ENCODE measurements at regions of chr1 and their contacts with region 1.

Region 1: GRCh38 chr1:81549604-81550127 is 251.1 kb upstream of the ADGRL2 start:
- DNase-seq: peak; percentile 35
- ATAC-seq: peak; percentile 78
- H3K4me3 ChIP-seq: no peak overlapping the region
- H3K27ac ChIP-seq: peak overlapping the region; percentile 14
- H3K4me1 ChIP-seq: peaks cover 32% of the 10 kb centered on the region
- H3K27me3 ChIP-seq: no peaks in the 10 kb centered on the region
- CTCF ChIP-seq: peak; percentile 58 to 67 (median 63)
- EP300 ChIP-seq: peak in 1 of 2 experiments; percentile 41; a peak in 1 of 4 replicates
- POLR2A ChIP-seq: no peak
- RAD21 ChIP-seq: peak; percentile 78

Region 2: GRCh38 chr1:81559662-81560350 is 10.1 kb after region 1 on chr1:
- CTCF ChIA-PET with region 1: interaction called, 13 read pairs
- POLR2A ChIA-PET with region 1: no interaction called
- RAD21 ChIA-PET with region 1: interaction called, 11 read pairs
- SMC1A ChIA-PET with region 1: interaction called, 12 read pairs
- in situ Hi-C with region 1: no loop called
- intact Hi-C with region 1: no loop called
- DNase-seq: no peak
- ATAC-seq: peak; percentile 78
- H3K4me3 ChIP-seq: no peak overlapping the region
- H3K27ac ChIP-seq: no peak overlapping the region
- H3K4me1 ChIP-seq: no peaks in the 10 kb centered on the region
- H3K27me3 ChIP-seq: no peaks in the 10 kb centered on the region
- CTCF ChIP-seq: 0 out of 6 replicates have a peak, but pooled peaks of 1 of the 3 experiments have one; percentile 8
- EP300 ChIP-seq: no peak
- POLR2A ChIP-seq: no peak
- RAD21 ChIP-seq: no peak

Region 3: GRCh38 chr1:81600878-81601622 is 51.4 kb after region 1 on chr1:
- CTCF ChIA-PET with region 1: interaction called, 60 read pairs
- POLR2A ChIA-PET with region 1: interaction called, 6 read pairs
- RAD21 ChIA-PET with region 1: interaction called, 77 read pairs
- SMC1A ChIA-PET with region 1: interaction called, 161 read pairs
- in situ Hi-C with region 1: no loop called
- intact Hi-C with region 1: loop called (anchors 1 kb)
- DNase-seq: no peak
- ATAC-seq: peak; percentile 71
- H3K4me3 ChIP-seq: no peak overlapping the region
- H3K27ac ChIP-seq: no peak overlapping the region; the same call in 1 of the 2 replicates
- H3K4me1 ChIP-seq: peaks cover 9% of the 10 kb centered on the region
- H3K27me3 ChIP-seq: no peaks in the 10 kb centered on the region
- CTCF ChIP-seq: no peak
- EP300 ChIP-seq: peak; percentile 42 to 72; a peak in 2 of 4 replicates
- POLR2A ChIP-seq: no peak
- RAD21 ChIP-seq: no peak

Region 4: GRCh38 chr1:81714636-81715035 is 165.0 kb after region 1 on chr1:
- CTCF ChIA-PET with region 1: interaction called, 6 read pairs
- POLR2A ChIA-PET with region 1: no interaction called
- RAD21 ChIA-PET with region 1: interaction called, 5 read pairs
- SMC1A ChIA-PET with region 1: interaction called, 27 read pairs
- in situ Hi-C with region 1: no loop called
- intact Hi-C with region 1: no loop called
- DNase-seq: no peak
- ATAC-seq: no peak
- H3K4me3 ChIP-seq: no peak overlapping the region
- H3K27ac ChIP-seq: no peak overlapping the region
- H3K4me1 ChIP-seq: no peaks in the 10 kb centered on the region
- H3K27me3 ChIP-seq: no peaks in the 10 kb centered on the region; a peak in 1 of 4 replicates
- CTCF ChIP-seq: no peak
- EP300 ChIP-seq: no peak
- POLR2A ChIP-seq: no peak
- RAD21 ChIP-seq: no peak

Region 5: DNA sequence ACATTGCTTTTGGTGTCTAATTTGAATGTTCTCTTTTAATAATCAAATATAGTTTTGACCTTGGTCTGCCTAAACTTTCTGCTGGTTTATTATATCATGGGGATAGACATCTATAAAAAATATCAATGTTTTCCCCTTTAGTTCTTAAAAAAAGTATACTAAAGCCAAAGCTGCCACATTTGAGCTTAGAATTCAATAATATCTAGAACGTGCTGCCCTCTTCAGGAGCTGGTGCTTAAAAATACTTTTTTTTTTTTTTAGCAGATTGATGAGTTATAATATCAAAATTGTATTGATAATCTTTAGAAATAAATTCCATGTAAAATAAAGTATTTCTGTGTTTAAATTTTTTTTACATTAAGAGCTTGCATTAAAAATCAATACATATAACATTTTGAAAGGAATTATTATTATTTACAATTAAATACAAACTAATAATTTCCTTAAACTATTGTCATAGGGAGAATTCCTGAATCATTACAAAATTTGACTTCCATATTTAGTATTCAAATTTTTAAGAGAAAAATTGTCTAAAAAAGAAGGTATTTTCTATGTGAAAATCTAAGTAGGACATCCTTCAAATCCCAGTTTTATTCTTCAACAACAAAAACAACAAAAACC is 210.9 kb after region 1 on chr1:
- CTCF ChIA-PET with region 1: interaction called, 340 read pairs
- POLR2A ChIA-PET with region 1: interaction called, 3 read pairs
- RAD21 ChIA-PET with region 1: interaction called, 296 read pairs
- SMC1A ChIA-PET with region 1: interaction called, 407 read pairs
- in situ Hi-C with region 1: no loop called
- intact Hi-C with region 1: loop called (anchors 1 kb)
- DNase-seq: no peak
- ATAC-seq: 0 out of 3 replicates have a peak, but pooled peaks have one; percentile 35
- H3K4me3 ChIP-seq: no peak overlapping the region
- H3K27ac ChIP-seq: no peak overlapping the region
- H3K4me1 ChIP-seq: no peaks in the 10 kb centered on the region
- H3K27me3 ChIP-seq: no peaks in the 10 kb centered on the region
- CTCF ChIP-seq: peak; percentile 18 to 48 (median 23); a peak in 4 of 6 replicates
- EP300 ChIP-seq: no peak
- POLR2A ChIP-seq: no peak
- RAD21 ChIP-seq: peak; percentile 41

Region 6: GRCh38 chr1:81808760-81809159 is 259.1 kb after region 1 on chr1:
- CTCF ChIA-PET with region 1: interaction called, 36 read pairs
- POLR2A ChIA-PET with region 1: no interaction called
- RAD21 ChIA-PET with region 1: interaction called, 28 read pairs
- SMC1A ChIA-PET with region 1: interaction called, 16 read pairs
- in situ Hi-C with region 1: no loop called
- intact Hi-C with region 1: no loop called
- DNase-seq: no peak
- ATAC-seq: peak; percentile 65
- H3K4me3 ChIP-seq: no peak overlapping the region
- H3K27ac ChIP-seq: no peak overlapping the region
- H3K4me1 ChIP-seq: no peaks in the 10 kb centered on the region
- H3K27me3 ChIP-seq: peaks cover 1 to 3% of the 10 kb centered on the region in 2 experiments; a peak in 2 of 4 replicates
- CTCF ChIP-seq: no peak; a peak in 1 of 6 replicates
- EP300 ChIP-seq: no peak
- POLR2A ChIP-seq: no peak
- RAD21 ChIP-seq: no peak